ENCODE measurements at regions of chr16 and their contacts with region 1.

Region 1: DNA sequence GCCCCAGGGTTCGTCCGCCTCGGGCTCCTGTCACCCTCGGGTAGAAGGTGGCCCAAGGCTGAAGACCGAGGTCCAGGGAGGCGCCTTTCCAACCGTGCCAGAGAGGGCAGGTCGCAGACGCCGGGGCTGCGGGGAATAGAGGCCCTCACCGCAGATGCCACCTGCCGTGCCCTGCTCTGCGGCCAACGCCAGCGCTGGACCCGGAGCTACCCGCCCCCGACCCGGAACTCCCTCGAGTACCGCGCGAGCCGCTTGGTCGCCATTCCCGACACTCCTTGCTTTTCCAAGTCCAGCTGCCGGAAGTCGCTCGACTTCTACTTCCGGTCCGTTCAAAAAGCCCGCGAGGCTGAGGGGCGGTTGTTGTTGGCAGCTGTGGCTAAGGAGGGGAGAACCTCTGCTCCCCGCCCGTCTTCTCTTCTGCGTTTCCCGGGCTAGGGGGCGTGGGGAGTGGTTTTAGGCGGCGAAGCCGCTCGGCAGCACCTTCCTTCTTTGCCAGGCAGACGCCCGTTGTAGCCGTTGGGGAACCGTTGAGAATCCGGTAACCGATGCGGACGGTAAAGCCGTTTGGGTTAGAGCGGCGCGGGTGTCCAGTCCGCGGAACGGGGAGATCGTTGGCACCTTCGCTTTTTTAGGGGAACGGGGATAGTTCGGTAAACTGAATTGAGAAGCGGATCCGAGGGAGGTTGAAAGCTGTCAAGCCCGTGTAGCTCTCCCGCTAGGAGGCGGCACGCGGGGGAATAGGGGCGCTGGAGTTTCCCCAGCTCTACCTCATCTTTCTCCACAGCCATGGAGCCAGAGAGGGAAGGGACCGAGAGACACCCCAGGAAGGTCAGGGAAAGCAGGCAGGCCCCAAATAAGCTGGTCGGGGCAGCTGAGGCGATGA is at the starts of genes ERI2 and REXO5:
- DNase-seq: peak; percentile 47 to 77 (median 65)
- ATAC-seq: peak; percentile 92
- H3K4me3 ChIP-seq: peak within 1 kb of the TSS; percentile 91
- H3K4me3 Mint-ChIP-seq: peak within 1 kb of the TSS; percentile 93 to 100 (median 96)
- H3K27ac ChIP-seq: peak within 1 kb of the TSS; percentile 73
- H3K27ac Mint-ChIP-seq: peak within 1 kb of the TSS; percentile 60 to 99 (median 93)
- H3K4me1 ChIP-seq: peaks cover 8 to 10% of the 10 kb centered on the region in 2 donors
- H3K4me1 Mint-ChIP-seq: peaks cover 7 to 36% (median 22%) of the 10 kb centered on the region in 7 donors
- H3K27me3 ChIP-seq: no peaks in the 10 kb centered on the region
- H3K27me3 Mint-ChIP-seq: no peaks in the 10 kb centered on the region
- total RNA-seq, gene ERI2: 2.4 to 10.4 (median 3.6) TPM
- total RNA-seq, gene REXO5: 0.35 to 9.5 (median 1.6) TPM

Region 2: DNA sequence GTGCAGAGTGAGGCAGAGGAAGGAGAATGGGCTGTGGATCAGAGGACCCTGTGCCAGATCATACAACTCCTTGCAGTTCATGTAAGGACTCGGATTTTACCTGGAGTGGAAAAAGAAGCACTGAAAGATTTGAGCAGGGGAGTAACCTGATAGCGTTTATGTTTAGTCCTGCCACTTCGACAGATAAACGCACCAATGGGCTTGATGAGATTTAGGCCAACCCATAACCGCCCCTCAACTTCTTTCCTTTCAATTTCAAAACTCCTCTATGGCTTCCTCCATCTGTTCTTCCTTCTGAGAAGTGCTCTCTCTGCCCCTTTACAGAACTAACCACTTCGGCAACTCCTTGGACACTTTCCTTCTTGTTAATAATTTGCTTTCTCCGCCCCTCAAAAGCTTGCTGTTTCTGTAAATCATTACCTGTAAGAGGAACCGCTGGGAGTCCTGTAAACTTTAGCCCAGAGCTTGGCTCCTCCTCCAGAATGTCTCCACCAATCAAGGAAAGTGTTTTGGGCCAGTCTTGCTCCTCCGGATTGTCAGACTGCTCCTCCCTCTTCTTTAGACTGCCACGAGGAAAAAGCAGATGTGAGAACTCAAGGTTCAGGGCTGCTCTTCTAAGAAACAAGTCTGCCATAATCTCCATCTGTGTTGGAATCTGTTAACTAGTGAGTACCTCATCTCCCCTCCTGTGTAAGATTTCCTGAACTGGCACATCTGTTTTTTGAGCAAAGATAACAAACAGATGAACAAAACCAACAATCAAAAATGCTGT is 42.8 kb before region 1 on chr16 and contains the start of gene ACSM3:
- CTCF ChIA-PET with region 1: no interaction called
- POLR2A ChIA-PET with region 1: no interaction called
- intact Hi-C with region 1: loop called (anchors 1 to 2 kb)
- DNase-seq: peak in 8 of 9 donors; percentile 51 to 84 (median 79)
- ATAC-seq: peak; percentile 99
- H3K4me3 ChIP-seq: peak within 1 kb of the TSS; percentile 72
- H3K4me3 Mint-ChIP-seq: peak within 1 kb of the TSS; percentile 80 to 97 (median 93)
- H3K27ac ChIP-seq: peak within 1 kb of the TSS; percentile 72
- H3K27ac Mint-ChIP-seq: peak within 1 kb of the TSS; percentile 90 to 96 (median 93)
- H3K4me1 ChIP-seq: peaks cover 4 to 13% of the 10 kb centered on the region in 2 donors
- H3K4me1 Mint-ChIP-seq: peaks cover 7 to 46% (median 31%) of the 10 kb centered on the region in 7 donors
- H3K27me3 ChIP-seq: no peaks in the 10 kb centered on the region
- H3K27me3 Mint-ChIP-seq: no peaks in the 10 kb centered on the region
- total RNA-seq, gene ACSM3: 3.0 to 10.9 (median 7.4) TPM

Region 3: GRCh38 chr16:20774703-20775362 is 31.6 kb before region 1 on chr16:
- CTCF ChIA-PET with region 1: no interaction called
- POLR2A ChIA-PET with region 1: no interaction called
- intact Hi-C with region 1: no loop called
- DNase-seq: peak; percentile 8 to 54 (median 27)
- ATAC-seq: peak; percentile 73
- H3K4me3 ChIP-seq: no peak overlapping the region
- H3K4me3 Mint-ChIP-seq: no peak overlapping the region
- H3K27ac ChIP-seq: no peak overlapping the region
- H3K27ac Mint-ChIP-seq: no peak overlapping the region
- H3K4me1 ChIP-seq: no peaks in the 10 kb centered on the region
- H3K4me1 Mint-ChIP-seq: peaks cover 0 to 4% (median 0%) of the 10 kb centered on the region in 7 donors
- H3K27me3 ChIP-seq: no peaks in the 10 kb centered on the region
- H3K27me3 Mint-ChIP-seq: peaks cover 0 to 3% (median 0%) of the 10 kb centered on the region in 5 donors

Region 4: GRCh38 chr16:20844588-20844987 is 38.2 kb after region 1 on chr16:
- CTCF ChIA-PET with region 1: interaction called, 5 read pairs
- POLR2A ChIA-PET with region 1: no interaction called
- intact Hi-C with region 1: loop called (anchors 1 to 2 kb)
- DNase-seq: peak in 7 of 9 donors; percentile 18 to 42 (median 28)
- ATAC-seq: peak; percentile 67
- H3K4me3 ChIP-seq: peak overlapping the region; percentile 2
- H3K4me3 Mint-ChIP-seq: peak overlapping the region; percentile 26 to 80 (median 55)
- H3K27ac ChIP-seq: peak overlapping the region; percentile 48
- H3K27ac Mint-ChIP-seq: peak overlapping the region; percentile 63 to 93 (median 74)
- H3K4me1 ChIP-seq: peaks cover 18 to 22% of the 10 kb centered on the region in 2 donors
- H3K4me1 Mint-ChIP-seq: peaks cover 14 to 35% (median 25%) of the 10 kb centered on the region in 7 donors
- H3K27me3 ChIP-seq: no peaks in the 10 kb centered on the region
- H3K27me3 Mint-ChIP-seq: no peaks in the 10 kb centered on the region

Region 5: DNA sequence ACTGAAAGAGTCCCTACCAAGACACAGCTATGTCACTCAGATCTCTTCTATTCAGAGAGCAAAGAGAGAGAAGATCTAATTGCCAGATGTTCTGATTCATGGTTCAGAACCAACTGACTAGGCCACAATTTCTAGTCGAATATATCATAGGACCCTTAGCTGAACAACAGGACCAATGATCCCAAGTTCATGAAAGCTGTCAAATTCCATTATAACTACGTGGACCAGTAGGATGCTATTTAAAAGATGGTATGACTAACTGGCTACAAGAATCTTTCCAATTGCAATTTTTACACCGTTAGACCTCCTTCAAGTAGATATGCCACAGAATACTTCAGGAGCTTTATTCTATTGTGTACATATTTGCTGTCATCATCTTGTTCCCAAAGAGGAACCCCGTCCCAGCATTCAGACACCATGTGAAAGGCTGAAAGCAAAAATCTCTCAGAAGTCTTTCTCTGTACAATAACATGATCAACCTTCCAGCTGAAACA is 67.7 kb after region 1 on chr16:
- CTCF ChIA-PET with region 1: interaction called, 3 read pairs
- POLR2A ChIA-PET with region 1: no interaction called
- intact Hi-C with region 1: loop called in 1 of 2 experiments (anchors 2 kb)
- DNase-seq: no peak
- ATAC-seq: no peak
- H3K4me3 ChIP-seq: peak overlapping the region; percentile 35
- H3K4me3 Mint-ChIP-seq: peak overlapping the region in 9 of 10 donors; percentile 67 to 85 (median 81)
- H3K27ac ChIP-seq: peak overlapping the region; percentile 62
- H3K27ac Mint-ChIP-seq: peak overlapping the region; percentile 37 to 99 (median 92)
- H3K4me1 ChIP-seq: peaks cover 18 to 27% of the 10 kb centered on the region in 2 donors
- H3K4me1 Mint-ChIP-seq: peaks cover 30 to 84% (median 40%) of the 10 kb centered on the region in 7 donors
- H3K27me3 ChIP-seq: no peaks in the 10 kb centered on the region
- H3K27me3 Mint-ChIP-seq: no peaks in the 10 kb centered on the region

Region 6: GRCh38 chr16:20944861-20945574 is 138.6 kb after region 1 on chr16:
- CTCF ChIA-PET with region 1: no interaction called
- POLR2A ChIA-PET with region 1: no interaction called
- intact Hi-C with region 1: loop called in 1 of 2 experiments (anchors 2 kb)
- DNase-seq: peak in 5 of 9 donors; percentile 3 to 32 (median 4)
- ATAC-seq: peak; percentile 74
- H3K4me3 ChIP-seq: no peak overlapping the region
- H3K4me3 Mint-ChIP-seq: no peak overlapping the region
- H3K27ac ChIP-seq: no peak overlapping the region
- H3K27ac Mint-ChIP-seq: peak overlapping the region in 1 of 9 donors; percentile 64
- H3K4me1 ChIP-seq: no peaks in the 10 kb centered on the region
- H3K4me1 Mint-ChIP-seq: peaks cover 0 to 42% (median 5%) of the 10 kb centered on the region in 7 donors
- H3K27me3 ChIP-seq: no peaks in the 10 kb centered on the region
- H3K27me3 Mint-ChIP-seq: peaks cover 0 to 8% (median 0%) of the 10 kb centered on the region in 5 donors

Measured in naive thymus-derived CD4-positive, alpha-beta T cell (primary cell).